ENCODE measurements at regions of chr16 and their contacts with region 1.

Region 1: DNA sequence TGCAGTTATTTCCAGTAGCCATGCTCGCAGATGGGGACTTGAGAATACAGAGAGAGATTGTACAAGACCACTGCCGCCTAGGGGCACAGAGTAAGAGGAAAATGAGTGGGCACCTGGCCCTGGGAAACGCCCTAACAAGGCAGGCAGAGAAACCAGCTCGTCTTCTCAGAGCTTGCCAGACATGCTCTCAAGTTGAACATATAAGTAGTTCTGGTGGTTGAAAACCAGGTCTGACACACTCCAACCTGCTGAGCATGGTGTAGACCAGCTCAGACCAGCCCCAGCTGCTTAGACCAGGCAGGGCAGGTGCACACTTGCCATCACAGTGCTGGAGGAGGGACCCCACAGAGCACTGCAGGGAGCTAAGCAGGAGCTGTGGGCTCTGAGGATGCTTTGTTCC is 250.5 kb downstream of the CPPED1 start:
- DNase-seq: no peak
- H3K4me3 Mint-ChIP-seq: no peak overlapping the region
- H3K27ac Mint-ChIP-seq: no peak overlapping the region
- H3K4me1 Mint-ChIP-seq: peaks cover 49% of the 10 kb centered on the region
- H3K27me3 Mint-ChIP-seq: no peaks in the 10 kb centered on the region

Region 2: GRCh38 chr16:12535535-12536411 is 17.4 kb before region 1 on chr16:
- CTCF ChIA-PET with region 1: interaction called, 20 read pairs
- POLR2A ChIA-PET with region 1: no interaction called
- DNase-seq: peak; percentile 64
- H3K4me3 Mint-ChIP-seq: peak overlapping the region; percentile 53
- H3K27ac Mint-ChIP-seq: peak overlapping the region; percentile 90
- H3K4me1 Mint-ChIP-seq: peaks cover 97% of the 10 kb centered on the region
- H3K27me3 Mint-ChIP-seq: no peaks in the 10 kb centered on the region